HCT116 (cell line): ENCODE measurements at regions of chr10 and their contacts with region 1.

Region 1: DNA sequence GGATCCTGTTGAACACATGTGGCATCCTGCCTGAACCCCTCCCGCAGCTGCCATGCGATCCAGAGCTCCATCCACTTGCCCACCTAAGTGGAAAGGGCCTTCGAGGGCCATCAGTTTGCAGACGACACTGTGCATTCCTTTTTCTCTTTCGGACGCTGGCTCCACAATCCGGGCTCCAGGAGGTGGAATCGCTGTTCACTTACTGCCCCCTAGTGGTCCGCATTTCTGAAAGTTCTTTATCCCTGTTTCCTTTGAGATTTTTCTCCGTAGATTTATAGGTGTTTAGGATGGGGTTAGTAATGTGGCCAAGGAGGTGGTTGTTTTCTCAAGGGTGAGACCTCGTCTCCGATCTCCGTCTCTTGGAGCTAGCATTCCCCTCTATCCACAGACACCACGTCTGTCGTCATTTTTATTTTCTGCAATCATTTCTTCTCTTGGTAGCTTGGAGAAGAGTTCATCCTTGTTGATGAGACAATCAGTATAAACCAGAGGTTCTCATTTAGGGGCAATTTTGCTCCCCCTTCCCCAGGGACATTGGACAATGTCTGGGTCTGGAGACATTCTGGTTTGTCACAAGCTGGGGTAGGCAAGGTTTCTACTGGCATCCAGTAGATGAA is 204.6 kb downstream of the ARHGAP21 start:
- DNase-seq: peak; percentile 23
- ATAC-seq: peak; percentile 86
- H3K4me3 ChIP-seq: no peak overlapping the region
- H3K27ac ChIP-seq: no peak overlapping the region
- H3K4me1 ChIP-seq: peaks cover 0 to 3% of the 10 kb centered on the region in 2 experiments; a peak in 1 of 4 replicates
- H3K27me3 ChIP-seq: no peaks in the 10 kb centered on the region
- CTCF ChIP-seq: peak; percentile 53 to 84 (median 73); a peak in 5 of 6 replicates
- POLR2A ChIP-seq: no peak
- RAD21 ChIP-seq: peak; percentile 80

Region 2: GRCh38 chr10:23525406-23525805 is 993.7 kb before region 1 on chr10:
- CTCF ChIA-PET with region 1: no interaction called
- POLR2A ChIA-PET with region 1: no interaction called
- RAD21 ChIA-PET with region 1: no interaction called
- intact Hi-C with region 1: loop called (anchors 10 kb)
- DNase-seq: no peak
- ATAC-seq: peak; percentile 83
- H3K4me3 ChIP-seq: no peak overlapping the region
- H3K27ac ChIP-seq: no peak overlapping the region
- H3K4me1 ChIP-seq: no peaks in the 10 kb centered on the region
- H3K27me3 ChIP-seq: peaks cover 9% of the 10 kb centered on the region; the same call in 1 of the 2 replicates
- CTCF ChIP-seq: peak; percentile 44 to 48 (median 45); a peak in 5 of 6 replicates
- POLR2A ChIP-seq: no peak
- RAD21 ChIP-seq: peak; percentile 67

Region 3: GRCh38 chr10:23702977-23703414 is 816.1 kb before region 1 on chr10:
- CTCF ChIA-PET with region 1: no interaction called
- POLR2A ChIA-PET with region 1: no interaction called
- RAD21 ChIA-PET with region 1: no interaction called
- intact Hi-C with region 1: loop called (anchors 10 kb)
- DNase-seq: peak; percentile 70
- ATAC-seq: peak; percentile 99
- H3K4me3 ChIP-seq: no peak overlapping the region
- H3K27ac ChIP-seq: no peak overlapping the region
- H3K4me1 ChIP-seq: no peaks in the 10 kb centered on the region
- H3K27me3 ChIP-seq: no peaks in the 10 kb centered on the region
- CTCF ChIP-seq: peak; percentile 65 to 73 (median 69)
- POLR2A ChIP-seq: no peak
- RAD21 ChIP-seq: peak; percentile 72

Region 4: GRCh38 chr10:23994479-23995046 is 524.5 kb before region 1 on chr10:
- CTCF ChIA-PET with region 1: interaction called, 13 read pairs
- POLR2A ChIA-PET with region 1: no interaction called
- RAD21 ChIA-PET with region 1: no interaction called
- intact Hi-C with region 1: loop called (anchors 1 kb)
- DNase-seq: peak; percentile 8
- ATAC-seq: 0 out of 2 replicates have a peak, but pooled peaks have one; percentile 63
- H3K4me3 ChIP-seq: no peak overlapping the region
- H3K27ac ChIP-seq: no peak overlapping the region
- H3K4me1 ChIP-seq: no peaks in the 10 kb centered on the region
- H3K27me3 ChIP-seq: no peaks in the 10 kb centered on the region
- CTCF ChIP-seq: peak; percentile 38 to 81 (median 71); a peak in 5 of 6 replicates
- POLR2A ChIP-seq: no peak
- RAD21 ChIP-seq: peak; percentile 63